GM10248 (cell line): ENCODE measurements at regions of chr3 and their contacts with region 1.

Region 1: GRCh38 chr3:43855674-43856299 is 165.0 kb downstream of the ABHD5 start:
- DNase-seq: peak; percentile 55
- CTCF ChIP-seq: peak; percentile 83

Region 2: DNA sequence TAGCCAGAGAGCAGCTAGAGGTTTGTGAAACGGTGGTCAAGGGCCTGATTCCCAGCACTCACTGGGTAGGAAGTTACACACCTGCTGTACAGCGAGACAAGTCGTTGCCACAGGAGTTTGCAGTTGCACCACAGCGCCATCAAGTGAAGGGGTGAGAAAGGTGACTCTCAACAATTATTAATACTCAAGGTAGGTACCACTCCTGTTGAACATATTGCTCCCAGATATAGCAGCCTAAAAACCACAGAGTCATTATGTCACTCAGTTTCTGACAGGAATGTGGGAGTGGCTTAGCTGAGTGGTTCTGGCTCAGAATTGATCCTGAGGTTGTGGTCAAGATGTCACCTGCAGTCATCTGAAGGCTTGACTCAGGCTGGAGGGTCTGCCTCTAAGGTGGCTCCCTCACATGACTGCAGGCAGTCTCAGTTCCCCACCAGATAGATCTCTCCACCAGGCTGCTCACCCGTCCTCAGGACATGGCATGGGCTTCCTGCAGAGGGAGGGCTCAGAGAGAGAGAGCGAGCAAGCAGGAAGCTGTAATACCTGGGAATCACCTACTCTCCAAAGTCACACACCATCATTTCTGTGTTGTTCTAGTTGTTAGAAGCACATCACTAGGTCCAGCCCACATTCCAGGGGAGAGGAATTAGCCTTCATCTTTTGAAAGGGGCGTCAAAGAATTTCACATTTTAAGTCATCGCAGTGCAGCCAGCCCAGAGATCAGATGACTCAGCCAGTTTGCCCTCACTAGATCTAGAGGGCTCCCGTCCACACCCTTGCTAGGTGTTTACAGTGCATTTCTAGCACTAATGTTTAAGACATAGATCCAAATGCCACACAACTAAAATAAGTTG is 217.0 kb before region 1 on chr3:
- CTCF ChIA-PET with region 1: no interaction called
- POLR2A ChIA-PET with region 1: no interaction called
- DNase-seq: peak; percentile 28
- CTCF ChIP-seq: peak; percentile 27

Region 3: GRCh38 chr3:43785551-43785950 is 70.2 kb before region 1 on chr3:
- CTCF ChIA-PET with region 1: interaction called, 11 read pairs
- POLR2A ChIA-PET with region 1: no interaction called
- DNase-seq: no peak
- CTCF ChIP-seq: no peak

Region 4: GRCh38 chr3:43843386-43843785 is 12.4 kb before region 1 on chr3:
- CTCF ChIA-PET with region 1: interaction called, 23 read pairs
- POLR2A ChIA-PET with region 1: no interaction called
- DNase-seq: no peak
- CTCF ChIP-seq: no peak

Region 5: DNA sequence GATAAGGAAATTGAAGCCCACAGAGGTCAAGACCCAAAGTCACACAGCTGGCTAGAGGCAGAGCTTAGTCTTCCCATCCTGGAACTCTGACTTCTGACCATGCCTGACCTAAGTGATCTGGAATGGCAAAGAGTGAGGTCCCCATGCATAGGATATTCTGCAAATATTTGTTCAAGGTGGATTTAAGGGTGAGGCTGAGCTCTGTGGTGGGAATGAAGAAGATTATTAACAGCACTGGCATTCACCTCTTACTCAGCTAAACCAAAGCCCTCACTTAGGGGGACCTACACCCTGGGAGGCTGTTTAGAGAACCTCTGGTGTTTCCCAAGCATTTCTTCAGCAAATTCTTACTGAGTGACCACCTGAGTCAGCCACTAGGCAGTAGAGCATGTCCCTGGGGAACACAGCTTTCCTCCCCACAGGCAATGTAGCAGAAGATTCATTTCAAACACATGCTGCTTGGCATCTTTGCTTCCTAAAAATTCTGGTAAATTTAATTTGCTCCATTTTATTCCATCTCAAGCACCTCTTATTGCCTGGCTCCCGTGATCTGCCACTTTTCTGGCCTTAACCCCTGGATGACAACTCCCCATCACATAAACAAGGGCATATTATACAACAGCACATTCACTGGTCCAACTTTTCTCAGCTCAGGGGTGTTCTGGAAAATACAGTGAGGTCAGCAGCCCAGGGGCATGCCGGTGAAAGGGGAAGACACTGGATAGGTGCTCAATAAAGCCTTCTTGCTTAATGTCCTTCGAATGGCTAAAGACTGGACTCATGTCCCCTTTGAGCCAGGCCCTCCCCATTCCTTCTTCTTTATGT is 11.0 kb after region 1 on chr3:
- CTCF ChIA-PET with region 1: interaction called, 34 read pairs
- POLR2A ChIA-PET with region 1: no interaction called
- DNase-seq: no peak
- CTCF ChIP-seq: no peak

Region 6: GRCh38 chr3:44184319-44184953 is 328.6 kb after region 1 on chr3:
- CTCF ChIA-PET with region 1: interaction called, 10 read pairs
- POLR2A ChIA-PET with region 1: no interaction called
- DNase-seq: no peak
- CTCF ChIP-seq: no peak

Region 7: GRCh38 chr3:44198284-44199269 is 342.8 kb after region 1 on chr3:
- CTCF ChIA-PET with region 1: interaction called, 69 read pairs
- POLR2A ChIA-PET with region 1: no interaction called
- DNase-seq: peak; percentile 77
- CTCF ChIP-seq: peak; percentile 81

Region 8: DNA sequence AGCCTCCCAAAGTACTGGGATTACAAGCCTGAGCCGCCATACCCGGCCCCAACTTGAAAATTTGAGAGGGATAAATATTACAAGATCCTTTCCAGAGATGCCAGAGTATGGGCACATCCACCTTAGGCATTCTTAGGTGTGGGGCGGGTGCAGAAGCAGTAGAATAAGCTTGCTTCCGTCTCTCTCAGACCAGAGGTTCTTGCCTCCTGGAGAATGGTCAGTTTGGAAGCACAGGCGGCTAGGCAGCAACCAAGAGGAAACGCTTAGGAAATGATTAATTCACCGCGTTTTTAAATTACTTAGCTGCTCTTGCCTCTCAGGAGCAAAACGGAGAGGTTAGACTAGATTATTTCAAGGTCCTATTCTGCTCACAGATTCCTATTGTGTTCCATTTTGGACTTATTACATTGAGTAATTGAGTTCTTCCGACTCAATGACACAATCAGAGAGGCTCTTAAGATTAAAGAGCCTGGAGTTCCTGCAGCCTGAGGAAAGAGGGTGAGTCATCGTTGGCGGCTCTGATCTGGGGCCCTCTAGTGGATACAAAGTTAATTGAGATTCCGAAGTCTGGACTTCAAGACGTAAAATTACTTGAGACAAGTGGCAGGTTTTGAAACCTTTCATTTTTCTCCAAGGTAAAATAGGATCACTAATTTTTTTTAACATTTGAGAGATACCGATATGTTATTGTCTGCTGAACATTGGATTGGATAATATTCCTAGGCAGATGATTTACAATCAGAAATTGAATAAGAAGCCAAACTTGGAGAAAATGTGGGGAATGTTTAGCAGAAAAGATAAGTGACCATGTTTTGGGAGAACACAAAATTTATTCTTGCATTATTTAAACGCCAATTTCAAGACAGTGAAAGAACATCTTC is 380.1 kb after region 1 on chr3:
- CTCF ChIA-PET with region 1: interaction called, 17 read pairs
- POLR2A ChIA-PET with region 1: no interaction called
- DNase-seq: peak; percentile 54
- CTCF ChIP-seq: peak; percentile 57